T-cell (primary cell): ENCODE measurements at regions of chr6 and their contacts with region 1.

Region 1: GRCh38 chr6:16128759-16129622 is at the start of gene MYLIP:
- DNase-seq: peak; percentile 91 to 99 (median 97)
- ATAC-seq: peak; percentile 80 to 89 (median 89)
- H3K4me3 ChIP-seq: peak within 1 kb of the TSS; percentile 87 to 93
- H3K4me3 Mint-ChIP-seq: peak within 1 kb of the TSS; percentile 91 to 94 (median 93)
- H3K27ac ChIP-seq: peak within 1 kb of the TSS; percentile 93
- H3K27ac Mint-ChIP-seq: peak within 1 kb of the TSS; percentile 85 to 88
- H3K4me1 ChIP-seq: peaks cover 13 to 34% of the 10 kb centered on the region in 2 experiments
- H3K4me1 Mint-ChIP-seq: peaks cover 31 to 49% (median 38%) of the 10 kb centered on the region in 3 donors
- H3K27me3 ChIP-seq: peaks cover 0 to 12% of the 10 kb centered on the region in 2 experiments
- H3K27me3 Mint-ChIP-seq: peaks cover 3% of the 10 kb centered on the region in 2 donors
- total RNA-seq, gene MYLIP: 18.4 to 210 (median 19.9) TPM

Region 2: DNA sequence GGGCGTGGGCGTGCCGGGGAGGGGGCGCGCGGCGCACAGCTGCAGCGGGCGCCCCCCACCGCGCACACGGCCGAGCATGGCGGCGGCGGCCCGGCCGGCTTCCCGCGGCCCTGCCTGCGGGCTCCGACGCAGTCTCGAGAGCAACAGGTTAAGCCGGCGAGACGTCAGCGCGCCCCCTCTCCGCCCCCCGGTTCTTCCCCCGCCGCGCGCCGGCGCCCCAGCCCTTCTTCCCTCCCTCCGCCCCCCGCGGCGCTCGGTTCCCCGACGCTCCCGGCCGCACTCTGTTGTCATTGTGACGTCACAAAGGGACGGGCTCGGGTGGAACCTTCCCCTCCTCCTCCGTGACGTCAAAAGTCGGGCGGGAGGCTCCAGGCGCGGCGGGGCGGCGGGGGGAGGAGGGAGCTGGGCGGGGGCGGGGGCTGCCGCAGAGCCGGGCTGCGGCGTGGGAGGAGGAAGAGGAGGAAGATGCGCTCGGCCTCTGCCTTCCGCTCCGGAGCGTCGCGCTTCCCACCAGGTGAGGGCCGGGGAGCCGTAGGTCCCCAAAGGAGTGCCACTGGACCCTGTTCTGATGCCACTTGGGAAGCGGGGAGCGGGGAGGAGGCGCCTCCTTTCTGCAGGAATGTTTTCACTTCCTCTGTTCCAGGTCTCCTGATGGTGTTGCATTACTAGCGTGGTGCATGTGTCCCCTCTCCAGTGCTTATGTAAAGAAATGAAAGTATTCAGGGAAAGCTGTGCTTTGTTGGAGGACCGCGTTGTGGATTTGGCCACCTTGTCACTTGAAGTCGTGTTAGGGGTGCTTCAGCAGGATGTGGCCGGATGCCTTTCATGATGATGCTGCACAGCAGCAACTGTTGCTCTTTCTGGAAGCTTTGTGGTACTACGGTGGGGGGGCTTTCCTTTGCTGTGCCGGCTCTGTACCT is 880.3 kb before region 1 on chr6:
- CTCF ChIA-PET with region 1: no interaction called
- POLR2A ChIA-PET with region 1: interaction called in 1 of 2 experiments, 16 read pairs
- DNase-seq: peak; percentile 74 to 100 (median 97)
- ATAC-seq: peak; percentile 44 to 61 (median 48)
- H3K4me3 ChIP-seq: peak overlapping the region; percentile 72 to 84
- H3K4me3 Mint-ChIP-seq: peak overlapping the region; percentile 91 to 99 (median 98)
- H3K27ac ChIP-seq: peak overlapping the region; percentile 98
- H3K27ac Mint-ChIP-seq: peak overlapping the region; percentile 97 to 98
- H3K4me1 ChIP-seq: peaks cover 28 to 39% of the 10 kb centered on the region in 2 experiments
- H3K4me1 Mint-ChIP-seq: peaks cover 58 to 71% (median 61%) of the 10 kb centered on the region in 3 donors
- H3K27me3 ChIP-seq: peaks cover 0 to 3% of the 10 kb centered on the region in 2 experiments
- H3K27me3 Mint-ChIP-seq: no peaks in the 10 kb centered on the region

Region 3: GRCh38 chr6:16105854-16106253 is 23.1 kb before region 1 on chr6:
- CTCF ChIA-PET with region 1: no interaction called
- POLR2A ChIA-PET with region 1: interaction called in 1 of 2 experiments, 16 read pairs
- DNase-seq: no peak
- ATAC-seq: no peak
- H3K4me3 ChIP-seq: no peak overlapping the region
- H3K4me3 Mint-ChIP-seq: no peak overlapping the region
- H3K27ac ChIP-seq: no peak overlapping the region
- H3K27ac Mint-ChIP-seq: no peak overlapping the region
- H3K4me1 ChIP-seq: no peaks in the 10 kb centered on the region
- H3K4me1 Mint-ChIP-seq: no peaks in the 10 kb centered on the region
- H3K27me3 ChIP-seq: no peaks in the 10 kb centered on the region
- H3K27me3 Mint-ChIP-seq: peaks cover 0 to 4% of the 10 kb centered on the region in 2 donors

Region 4: GRCh38 chr6:16146527-16146955 is 17.6 kb after region 1 on chr6:
- CTCF ChIA-PET with region 1: interaction called in 1 of 2 experiments, 3 read pairs
- POLR2A ChIA-PET with region 1: interaction called, 3 to 12 read pairs
- DNase-seq: no peak
- ATAC-seq: no peak
- H3K4me3 ChIP-seq: no peak overlapping the region
- H3K4me3 Mint-ChIP-seq: no peak overlapping the region
- H3K27ac ChIP-seq: no peak overlapping the region
- H3K27ac Mint-ChIP-seq: no peak overlapping the region
- H3K4me1 ChIP-seq: peaks cover 0 to 5% of the 10 kb centered on the region in 2 experiments
- H3K4me1 Mint-ChIP-seq: peaks cover 32 to 41% (median 34%) of the 10 kb centered on the region in 3 donors
- H3K27me3 ChIP-seq: no peaks in the 10 kb centered on the region
- H3K27me3 Mint-ChIP-seq: no peaks in the 10 kb centered on the region

Region 5: DNA sequence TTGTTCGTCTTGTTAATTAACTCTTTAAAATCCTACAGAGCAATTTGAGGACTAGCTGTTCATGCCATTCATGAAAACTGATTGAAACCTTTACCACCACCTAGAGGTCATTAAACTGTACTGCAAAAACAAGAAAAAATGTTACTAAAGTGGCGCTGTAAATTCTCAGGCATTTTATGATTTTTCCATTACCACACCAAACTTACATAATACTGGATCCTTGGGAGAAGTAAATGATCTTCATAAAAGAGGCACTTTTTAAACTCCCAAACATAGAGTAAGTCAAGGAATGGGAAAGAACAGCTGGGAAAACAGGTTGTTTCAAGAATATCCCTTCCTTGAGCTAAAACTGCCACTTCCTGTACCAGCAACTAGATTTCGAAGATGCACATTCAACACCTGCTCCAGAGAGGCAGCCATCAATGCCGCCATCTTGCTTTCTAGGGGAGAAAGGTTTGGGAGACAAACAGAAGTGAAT is 54.2 kb after region 1 on chr6:
- CTCF ChIA-PET with region 1: interaction called, 13 to 22 read pairs
- POLR2A ChIA-PET with region 1: interaction called, 5 to 25 read pairs
- DNase-seq: peak in 1 of 35 experiments; percentile 59
- ATAC-seq: no peak
- H3K4me3 ChIP-seq: no peak overlapping the region
- H3K4me3 Mint-ChIP-seq: no peak overlapping the region
- H3K27ac ChIP-seq: no peak overlapping the region
- H3K27ac Mint-ChIP-seq: peak overlapping the region in 1 of 2 donors; percentile 22
- H3K4me1 ChIP-seq: peaks cover 4 to 31% of the 10 kb centered on the region in 2 experiments
- H3K4me1 Mint-ChIP-seq: peaks cover 25 to 40% (median 33%) of the 10 kb centered on the region in 3 donors
- H3K27me3 ChIP-seq: no peaks in the 10 kb centered on the region
- H3K27me3 Mint-ChIP-seq: peaks cover 0 to under 1% of the 10 kb centered on the region in 2 donors

Region 6: DNA sequence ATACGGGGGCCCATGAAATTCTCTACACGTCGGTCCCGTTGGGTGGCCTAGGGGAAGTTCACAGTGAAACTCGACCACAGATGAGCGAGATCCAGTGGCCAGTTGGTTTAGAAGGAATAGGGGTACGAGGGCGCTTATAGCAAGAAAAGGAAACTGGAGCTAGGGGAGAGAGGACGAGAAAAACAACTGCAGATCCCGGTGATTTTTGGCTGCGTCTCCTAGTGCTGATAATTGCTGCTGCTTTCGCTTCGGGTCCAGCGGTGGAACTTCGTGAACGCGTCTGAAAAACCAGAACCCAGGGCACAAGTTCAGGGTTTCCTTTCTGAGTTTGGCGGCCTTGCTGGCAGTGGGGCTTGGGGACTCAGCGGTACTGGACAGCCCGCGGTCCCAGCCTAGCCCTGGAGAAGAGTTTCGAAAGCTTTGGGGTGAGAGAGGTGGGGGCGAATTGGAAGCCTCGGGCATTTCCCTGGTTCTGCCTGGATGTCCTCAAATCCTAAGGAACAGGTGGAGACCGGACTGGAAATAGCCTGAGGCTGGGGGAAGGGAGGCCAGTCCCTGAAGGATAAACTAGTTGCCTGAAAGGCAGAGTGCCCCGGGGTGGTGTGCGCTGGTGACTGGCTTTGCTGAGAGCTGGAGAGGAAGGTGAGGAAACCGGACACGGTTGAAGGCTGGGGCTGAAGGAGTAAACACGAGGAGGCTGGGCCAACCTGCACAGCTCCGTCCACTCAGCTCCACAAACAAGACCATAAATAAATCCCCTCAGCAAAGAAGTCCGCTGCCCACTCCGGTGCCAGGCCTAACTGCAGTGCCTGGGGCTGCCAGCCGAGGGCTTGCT is 110.2 kb after region 1 on chr6:
- CTCF ChIA-PET with region 1: no interaction called
- POLR2A ChIA-PET with region 1: interaction called in 1 of 2 experiments, 10 read pairs
- DNase-seq: peak in 10 of 35 experiments; percentile 1 to 31 (median 8)
- ATAC-seq: peak in 3 of 4 experiments; percentile 4 to 19 (median 8)
- H3K4me3 ChIP-seq: peak overlapping the region; percentile 57 to 81
- H3K4me3 Mint-ChIP-seq: peak overlapping the region; percentile 80 to 88 (median 85)
- H3K27ac ChIP-seq: no peak overlapping the region
- H3K27ac Mint-ChIP-seq: peak overlapping the region; percentile 5 to 20
- H3K4me1 ChIP-seq: peaks cover 0 to 19% of the 10 kb centered on the region in 2 experiments
- H3K4me1 Mint-ChIP-seq: peaks cover 20 to 27% (median 22%) of the 10 kb centered on the region in 3 donors
- H3K27me3 ChIP-seq: peaks cover 0 to 26% of the 10 kb centered on the region in 2 experiments
- H3K27me3 Mint-ChIP-seq: peaks cover 19 to 33% of the 10 kb centered on the region in 2 donors

Region 7: GRCh38 chr6:17714879-17715851 is 1586.2 kb after region 1 on chr6:
- CTCF ChIA-PET with region 1: interaction called in 1 of 2 experiments, 12 read pairs
- POLR2A ChIA-PET with region 1: no interaction called
- DNase-seq: peak in 1 of 35 experiments; percentile 34
- ATAC-seq: peak in 3 of 4 experiments; percentile 54 to 74 (median 73)
- H3K4me3 ChIP-seq: no peak overlapping the region
- H3K4me3 Mint-ChIP-seq: no peak overlapping the region
- H3K27ac ChIP-seq: no peak overlapping the region
- H3K27ac Mint-ChIP-seq: peak overlapping the region; percentile 86 to 90
- H3K4me1 ChIP-seq: no peaks in the 10 kb centered on the region
- H3K4me1 Mint-ChIP-seq: peaks cover 8 to 13% (median 12%) of the 10 kb centered on the region in 3 donors
- H3K27me3 ChIP-seq: peaks cover 0 to 2% of the 10 kb centered on the region in 2 experiments
- H3K27me3 Mint-ChIP-seq: no peaks in the 10 kb centered on the region